Heart right ventricle (tissue), 16 donors: ENCODE measurements at regions of chr11 and their contacts with region 1.

Region 1: DNA sequence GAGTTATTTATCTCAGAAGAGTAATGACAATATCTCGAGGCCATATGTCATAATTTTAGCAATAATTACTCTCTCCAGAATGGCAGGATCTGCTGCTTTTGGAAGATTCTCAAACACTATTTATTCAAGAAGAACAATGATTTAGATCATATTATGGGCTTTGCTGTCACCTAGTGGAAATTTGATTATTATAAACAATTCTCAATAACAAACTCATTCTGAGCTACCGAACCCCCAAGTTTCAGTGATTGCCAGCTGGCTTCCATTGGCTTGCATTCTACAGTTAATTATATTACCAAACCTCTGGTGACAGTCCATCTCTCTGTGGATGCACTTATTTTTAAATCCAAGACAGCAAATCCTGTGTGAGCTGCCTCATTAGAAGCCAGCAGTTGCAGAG is 27.9 kb upstream of the SLC36A4 start:
- DNase-seq: no peak
- ATAC-seq: no peak
- H3K4me3 ChIP-seq: no peak overlapping the region
- H3K27ac ChIP-seq: no peak overlapping the region
- H3K4me1 ChIP-seq: no peaks in the 10 kb centered on the region
- H3K27me3 ChIP-seq: peaks cover 0 to 6% (median 0%) of the 10 kb centered on the region in 7 donors
- CTCF ChIP-seq: peak in 8 of 9 donors; percentile 9 to 61 (median 48)

Region 2: GRCh38 chr11:92941676-92942571 is 283.7 kb before region 1 on chr11:
- intact Hi-C with region 1: loop called in 9 of 10 experiments (anchors 5 to 10 kb)
- DNase-seq: no peak
- ATAC-seq: no peak
- H3K4me3 ChIP-seq: no peak overlapping the region
- H3K27ac ChIP-seq: no peak overlapping the region
- H3K4me1 ChIP-seq: no peaks in the 10 kb centered on the region
- H3K27me3 ChIP-seq: peaks cover 0 to 8% (median 0%) of the 10 kb centered on the region in 7 donors
- CTCF ChIP-seq: peak in 8 of 9 donors; percentile 7 to 64 (median 51)

Region 3: GRCh38 chr11:93089474-93090102 is 136.1 kb before region 1 on chr11:
- intact Hi-C with region 1: loop called in 1 of 10 experiments (anchors 10 kb)
- DNase-seq: no peak
- ATAC-seq: peak in 4 of 8 donors; percentile 43 to 63 (median 59)
- H3K4me3 ChIP-seq: no peak overlapping the region
- H3K27ac ChIP-seq: no peak overlapping the region
- H3K4me1 ChIP-seq: peaks cover 0 to 4% (median 0%) of the 10 kb centered on the region in 9 donors
- H3K27me3 ChIP-seq: peaks cover 0 to 4% (median 0%) of the 10 kb centered on the region in 7 donors
- CTCF ChIP-seq: peak in 6 of 9 donors; percentile 27 to 54 (median 46)